SK-N-SH (cell line): ENCODE measurements at regions of chr2 and their contacts with region 1.

Region 1: DNA sequence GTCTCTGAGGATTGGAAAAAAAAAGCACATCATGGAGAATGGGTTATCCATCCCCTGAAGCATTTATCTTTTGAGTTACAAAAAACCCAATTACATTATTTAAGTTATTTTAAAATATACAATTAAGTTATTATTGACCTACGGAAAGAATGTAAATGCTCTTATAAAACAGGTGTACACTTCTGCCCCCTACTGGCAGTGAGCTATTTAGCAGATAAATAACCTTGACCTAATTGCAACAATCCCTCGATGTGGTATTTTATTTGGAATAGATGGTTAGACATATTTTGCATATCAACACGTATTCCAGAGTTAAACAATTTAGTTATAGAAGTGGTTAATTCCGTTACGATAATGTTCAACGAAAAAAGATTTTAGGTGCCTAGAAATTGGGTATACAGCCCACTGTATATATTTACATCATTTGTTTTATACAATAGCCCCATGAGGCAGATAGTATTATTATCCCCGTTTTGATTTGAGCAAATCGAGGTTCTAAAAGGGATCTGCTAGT is 9.1 kb upstream of the DAW1 start:
- DNase-seq: peak; percentile 48
- H3K4me3 ChIP-seq: peak overlapping the region in 1 of 2 experiments; percentile 4; a peak in 1 of 4 replicates
- H3K27ac ChIP-seq: peak overlapping the region in 1 of 2 experiments; percentile 88; a peak in 2 of 4 replicates
- H3K4me1 ChIP-seq: peaks cover 0 to 18% of the 10 kb centered on the region in 2 experiments; a peak in 2 of 4 replicates
- H3K27me3 ChIP-seq: no peaks in the 10 kb centered on the region
- CTCF ChIP-seq: peak; percentile 88
- EP300 ChIP-seq: no peak
- RAD21 ChIP-seq: peak; percentile 49

Region 2: GRCh38 chr2:227351639-227352038 is 510.6 kb before region 1 on chr2:
- CTCF ChIA-PET with region 1: no interaction called
- POLR2A ChIA-PET with region 1: no interaction called
- DNase-seq: no peak
- H3K4me3 ChIP-seq: no peak overlapping the region
- H3K27ac ChIP-seq: no peak overlapping the region
- H3K4me1 ChIP-seq: no peaks in the 10 kb centered on the region
- H3K27me3 ChIP-seq: no peaks in the 10 kb centered on the region
- CTCF ChIP-seq: no peak
- EP300 ChIP-seq: no peak
- RAD21 ChIP-seq: no peak

Region 3: DNA sequence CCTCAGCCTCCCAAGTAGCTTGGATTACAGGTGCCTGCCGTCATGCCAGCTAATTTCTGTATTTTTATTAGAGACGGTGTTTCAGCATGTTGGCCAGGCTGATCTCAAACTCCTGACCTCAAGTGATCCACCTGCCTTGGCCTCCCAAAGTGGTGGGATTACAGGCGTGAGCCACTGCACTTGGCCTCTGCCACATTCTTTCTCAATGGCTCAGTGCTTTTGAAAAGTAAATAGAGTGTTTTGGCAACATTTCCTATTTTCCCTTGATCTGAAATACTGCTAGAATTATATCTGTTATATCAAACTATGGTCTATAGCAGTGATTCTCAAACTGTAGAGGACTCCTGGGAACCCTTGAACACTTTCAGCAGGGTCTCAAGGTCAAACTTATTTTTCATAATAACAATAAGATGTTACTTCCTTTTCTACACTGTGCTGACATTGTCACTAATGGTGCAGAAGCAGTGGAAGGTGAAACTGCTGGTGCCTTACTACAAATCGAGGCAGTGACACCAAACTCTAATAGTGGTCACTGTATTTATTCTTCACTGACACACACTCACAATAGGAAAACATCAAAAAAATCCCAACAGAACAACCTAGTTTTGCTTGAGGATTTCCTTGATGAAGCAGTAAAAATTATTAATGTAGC is 19.7 kb after region 1 on chr2:
- CTCF ChIA-PET with region 1: interaction called, 21 read pairs
- POLR2A ChIA-PET with region 1: no interaction called
- DNase-seq: no peak
- H3K4me3 ChIP-seq: no peak overlapping the region
- H3K27ac ChIP-seq: no peak overlapping the region
- H3K4me1 ChIP-seq: peaks cover 0 to 14% of the 10 kb centered on the region in 2 experiments; a peak in 1 of 4 replicates
- H3K27me3 ChIP-seq: no peaks in the 10 kb centered on the region
- CTCF ChIP-seq: no peak
- EP300 ChIP-seq: no peak
- RAD21 ChIP-seq: no peak